ENCODE measurements at regions of chr12 and their contacts with region 1.

Region 1: DNA sequence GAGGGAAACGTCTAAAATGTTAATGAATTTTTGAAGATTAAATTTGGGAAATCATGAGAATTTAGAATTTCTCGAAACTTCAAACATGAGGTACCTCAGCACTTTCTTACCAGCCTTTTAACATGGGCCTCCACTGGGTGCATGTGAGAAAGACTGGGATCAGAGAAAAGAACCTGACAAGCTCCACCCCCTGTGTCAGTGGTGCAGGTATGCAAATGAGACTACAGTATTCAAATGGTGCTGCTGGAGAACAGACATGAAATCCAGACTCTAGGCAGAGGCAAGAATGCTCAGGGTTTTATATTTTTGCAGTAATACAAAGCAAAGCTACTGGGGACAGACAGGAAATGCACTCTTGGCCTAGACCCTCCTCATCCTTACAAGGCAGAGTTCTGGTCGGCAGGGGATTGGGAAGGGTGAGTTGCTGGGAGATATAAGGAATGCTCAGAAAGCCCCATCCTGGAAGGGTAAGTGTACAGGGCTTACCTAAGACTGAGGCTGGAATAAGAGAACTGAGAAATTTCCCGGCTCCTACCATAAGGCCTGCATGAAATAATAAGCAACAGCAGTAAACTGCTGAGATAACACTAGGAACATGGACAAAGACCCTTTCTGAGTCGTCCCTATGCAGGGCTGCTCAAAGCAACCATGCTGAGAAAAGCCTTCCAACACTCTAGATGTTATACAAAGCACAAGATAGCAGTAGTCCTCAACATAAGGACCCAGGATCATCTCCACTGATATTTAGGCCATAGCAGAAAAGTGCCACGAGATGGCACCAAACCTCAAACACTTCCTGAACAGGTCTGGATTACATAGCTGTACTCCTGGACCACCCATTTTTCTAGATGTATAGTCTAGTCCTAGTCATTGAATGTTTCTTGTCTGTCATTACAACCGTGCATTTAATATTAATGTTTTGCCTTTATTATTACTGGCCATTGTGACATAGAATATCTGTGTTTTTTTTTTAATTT is 260.8 kb downstream of the RASSF9 start:
- DNase-seq: no peak
- H3K4me3 ChIP-seq: no peak overlapping the region
- H3K27me3 ChIP-seq: no peaks in the 10 kb centered on the region
- CTCF ChIP-seq: peak; percentile 83

Region 2: GRCh38 chr12:85188609-85189008 is 386.8 kb before region 1 on chr12:
- CTCF ChIA-PET with region 1: no interaction called
- POLR2A ChIA-PET with region 1: interaction called, 10 read pairs
- DNase-seq: no peak
- H3K4me3 ChIP-seq: no peak overlapping the region
- H3K27me3 ChIP-seq: no peaks in the 10 kb centered on the region
- CTCF ChIP-seq: no peak

Region 3: GRCh38 chr12:85642810-85643209 is 67.4 kb after region 1 on chr12:
- CTCF ChIA-PET with region 1: interaction called, 51 read pairs
- POLR2A ChIA-PET with region 1: no interaction called
- DNase-seq: no peak
- H3K4me3 ChIP-seq: no peak overlapping the region
- H3K27me3 ChIP-seq: no peaks in the 10 kb centered on the region
- CTCF ChIP-seq: peak; percentile 79